Naive thymus-derived CD4-positive, alpha-beta T cell (primary cell): ENCODE measurements at regions of chr6 and their contacts with region 1.

Region 1: DNA sequence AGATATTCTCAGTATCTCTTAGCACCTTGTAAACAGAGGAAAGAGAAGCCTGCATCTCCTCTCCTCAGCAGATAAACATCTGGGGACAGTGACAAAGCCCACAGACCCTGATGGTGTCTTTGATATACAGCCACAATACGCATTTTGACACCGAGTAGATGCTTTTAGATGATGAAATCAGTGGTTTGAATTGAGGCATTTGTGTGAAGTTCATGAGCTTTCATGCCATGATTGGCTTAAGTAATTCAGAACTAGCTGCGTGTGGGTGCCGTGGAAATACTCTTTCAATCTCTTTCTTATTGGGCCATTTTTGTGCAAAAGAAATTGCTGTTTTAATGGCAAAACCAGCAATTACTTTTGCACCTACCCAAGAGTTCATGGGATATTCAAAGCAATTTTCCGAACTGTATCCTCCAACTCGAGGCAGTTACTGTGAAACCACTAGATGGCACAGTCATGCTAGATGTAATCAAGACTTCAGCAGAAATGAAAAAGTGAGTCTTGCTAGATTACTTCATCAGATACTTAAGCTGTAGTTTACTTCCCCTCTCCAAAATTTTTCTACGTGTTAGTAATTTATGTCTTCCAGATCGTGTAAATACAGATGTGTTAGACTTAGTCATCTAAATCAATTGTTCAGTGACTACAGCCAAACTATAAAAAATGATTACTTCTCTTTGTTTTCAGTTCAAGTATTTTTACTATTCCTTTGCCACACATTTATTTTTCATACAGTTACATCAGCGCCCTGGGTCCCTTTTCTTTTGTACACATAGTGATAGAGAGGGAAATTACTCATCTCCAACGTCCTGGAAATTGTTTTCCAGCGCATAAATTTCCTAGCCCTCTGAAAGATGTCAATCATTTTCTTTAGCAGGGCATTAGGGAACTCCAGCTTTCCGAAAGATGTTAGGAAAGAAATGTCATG is 49.4 kb downstream of the IYD start:
- DNase-seq: peak in 6 of 9 donors; percentile 24 to 56 (median 32)
- ATAC-seq: peak; percentile 81
- H3K4me3 ChIP-seq: peak overlapping the region; percentile 53
- H3K4me3 Mint-ChIP-seq: peak overlapping the region; percentile 65 to 88 (median 80)
- H3K27ac ChIP-seq: no peak overlapping the region
- H3K27ac Mint-ChIP-seq: peak overlapping the region in 2 of 9 donors; percentile 26
- H3K4me1 ChIP-seq: peaks cover 0 to 4% of the 10 kb centered on the region in 2 donors
- H3K4me1 Mint-ChIP-seq: peaks cover 2 to 15% (median 10%) of the 10 kb centered on the region in 7 donors
- H3K27me3 ChIP-seq: no peaks in the 10 kb centered on the region
- H3K27me3 Mint-ChIP-seq: peaks cover 27 to 41% (median 29%) of the 10 kb centered on the region in 5 donors

Region 2: DNA sequence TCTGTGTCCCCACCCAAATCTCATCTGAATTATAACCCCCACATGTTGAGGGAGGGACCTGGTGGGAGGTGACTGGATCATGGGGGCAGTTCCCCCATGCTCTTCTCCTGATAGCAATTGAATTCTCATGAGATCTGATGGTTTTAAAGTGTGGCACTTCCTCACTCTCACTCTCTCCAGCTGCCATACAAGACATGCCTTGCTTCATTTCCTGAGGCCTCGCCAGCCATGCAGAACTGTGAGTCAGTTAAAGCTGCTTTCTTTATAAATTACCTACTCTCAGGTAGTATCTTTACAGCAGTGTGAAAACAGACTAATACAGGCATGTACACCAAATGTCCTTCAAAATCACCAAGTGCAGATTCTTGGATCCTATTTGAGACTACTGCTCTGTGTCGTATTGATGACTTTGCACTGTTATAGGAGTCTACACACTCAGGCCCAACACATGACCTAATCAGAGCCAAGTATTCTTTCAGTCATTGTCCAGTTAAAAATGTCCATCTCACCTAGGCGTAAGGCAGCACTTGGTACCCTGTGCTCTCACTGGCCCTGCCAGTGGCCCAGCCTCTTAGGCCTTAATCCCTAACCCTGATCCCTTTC is 1724.2 kb before region 1 on chr6:
- CTCF ChIA-PET with region 1: no interaction called
- POLR2A ChIA-PET with region 1: no interaction called
- intact Hi-C with region 1: no loop called
- DNase-seq: no peak
- ATAC-seq: peak; percentile 44
- H3K4me3 ChIP-seq: no peak overlapping the region
- H3K4me3 Mint-ChIP-seq: no peak overlapping the region
- H3K27ac ChIP-seq: no peak overlapping the region
- H3K27ac Mint-ChIP-seq: no peak overlapping the region
- H3K4me1 ChIP-seq: no peaks in the 10 kb centered on the region
- H3K4me1 Mint-ChIP-seq: no peaks in the 10 kb centered on the region
- H3K27me3 ChIP-seq: no peaks in the 10 kb centered on the region
- H3K27me3 Mint-ChIP-seq: peaks cover 0 to 5% (median 0%) of the 10 kb centered on the region in 5 donors

Region 3: GRCh38 chr6:150600301-150601017 is 182.3 kb after region 1 on chr6:
- CTCF ChIA-PET with region 1: no interaction called
- POLR2A ChIA-PET with region 1: no interaction called
- intact Hi-C with region 1: loop called (anchors 2 to 10 kb)
- DNase-seq: peak; percentile 7 to 58 (median 35)
- ATAC-seq: peak; percentile 81
- H3K4me3 ChIP-seq: peak overlapping the region; percentile 61
- H3K4me3 Mint-ChIP-seq: peak overlapping the region; percentile 79 to 91 (median 86)
- H3K27ac ChIP-seq: no peak overlapping the region
- H3K27ac Mint-ChIP-seq: peak overlapping the region in 3 of 9 donors; percentile 56 to 77 (median 73)
- H3K4me1 ChIP-seq: no peaks in the 10 kb centered on the region
- H3K4me1 Mint-ChIP-seq: peaks cover 7 to 20% (median 16%) of the 10 kb centered on the region in 7 donors
- H3K27me3 ChIP-seq: peaks cover 0 to 2% of the 10 kb centered on the region in 2 donors
- H3K27me3 Mint-ChIP-seq: peaks cover 56 to 75% (median 72%) of the 10 kb centered on the region in 5 donors

Region 4: DNA sequence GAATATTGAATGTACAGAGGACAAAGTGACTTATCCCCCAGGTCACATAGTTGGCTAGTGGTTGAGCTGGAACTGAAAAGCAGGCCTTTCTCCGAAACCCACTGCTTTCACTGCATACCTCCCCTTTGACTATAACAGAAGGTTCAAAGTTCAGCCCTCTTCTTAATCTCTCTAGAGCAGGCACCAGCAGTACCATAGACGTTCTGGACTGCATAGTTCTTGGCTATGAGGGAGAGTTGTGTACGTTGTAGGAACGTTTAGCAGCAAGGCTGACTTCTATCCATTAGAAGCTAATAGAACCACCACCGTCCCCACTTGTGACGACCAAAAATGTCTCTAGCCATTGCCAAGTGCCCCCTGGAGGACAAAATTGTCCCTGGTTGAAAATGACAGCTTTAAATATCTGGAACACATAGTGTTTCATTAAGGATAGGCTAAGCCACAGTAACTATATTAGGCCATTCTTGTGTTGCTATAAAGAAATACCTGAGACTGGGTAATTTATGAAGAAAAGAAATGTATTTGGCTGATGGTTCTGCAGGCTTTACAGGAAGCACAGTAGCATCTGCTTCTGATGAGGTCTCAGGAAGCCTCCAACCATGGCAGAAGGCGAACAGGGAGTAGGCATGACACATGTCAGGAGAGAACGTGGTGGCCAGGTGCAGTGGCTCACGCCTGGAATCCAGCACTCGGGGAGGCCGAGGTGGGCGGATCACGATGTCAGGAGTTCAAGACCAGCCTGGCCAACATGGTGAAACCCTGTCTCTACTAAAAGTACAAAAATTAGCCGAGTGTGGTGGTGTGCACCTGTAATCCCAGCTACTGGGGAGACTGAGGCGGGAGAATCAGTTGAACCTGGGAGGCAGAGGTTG is 323.7 kb after region 1 on chr6:
- CTCF ChIA-PET with region 1: no interaction called
- POLR2A ChIA-PET with region 1: no interaction called
- intact Hi-C with region 1: loop called (anchors 1 kb)
- DNase-seq: no peak
- ATAC-seq: no peak
- H3K4me3 ChIP-seq: no peak overlapping the region
- H3K4me3 Mint-ChIP-seq: no peak overlapping the region
- H3K27ac ChIP-seq: no peak overlapping the region
- H3K27ac Mint-ChIP-seq: no peak overlapping the region
- H3K4me1 ChIP-seq: no peaks in the 10 kb centered on the region
- H3K4me1 Mint-ChIP-seq: no peaks in the 10 kb centered on the region
- H3K27me3 ChIP-seq: no peaks in the 10 kb centered on the region
- H3K27me3 Mint-ChIP-seq: peaks cover 5 to 14% (median 11%) of the 10 kb centered on the region in 5 donors